GM23248 (cell line): ENCODE measurements at regions of chr1 and their contacts with region 1.

Region 1: GRCh38 chr1:153220606-153221303 is 3.4 kb downstream of the PRR9 start:
- DNase-seq: no peak
- H3K4me3 ChIP-seq: no peak overlapping the region
- H3K27ac ChIP-seq: no peak overlapping the region
- H3K4me1 ChIP-seq: no peaks in the 10 kb centered on the region
- H3K27me3 ChIP-seq: no peaks in the 10 kb centered on the region; the same call in 1 of the 2 replicates

Region 2: GRCh38 chr1:152654110-152654509 is 566.6 kb before region 1 on chr1:
- in situ Hi-C with region 1: loop called (anchors 25 kb)
- DNase-seq: peak; percentile 74
- H3K4me3 ChIP-seq: no peak overlapping the region
- H3K27ac ChIP-seq: no peak overlapping the region
- H3K4me1 ChIP-seq: peaks cover 11% of the 10 kb centered on the region; the same call in 1 of the 2 replicates
- H3K27me3 ChIP-seq: no peaks in the 10 kb centered on the region